HepG2 (cell line): ENCODE measurements at regions of chr14 and their contacts with region 1.

Region 1: GRCh38 chr14:77053046-77053841 is 24.7 kb upstream of the IRF2BPL start:
- DNase-seq: peak; percentile 70
- ATAC-seq: peak; percentile 95
- H3K4me3 ChIP-seq: no peak overlapping the region
- H3K27ac ChIP-seq: no peak overlapping the region
- H3K4me1 ChIP-seq: peaks cover 25% of the 10 kb centered on the region
- H3K27me3 ChIP-seq: peaks cover 0 to 8% of the 10 kb centered on the region in 2 experiments; a peak in 1 of 5 replicates
- CTCF ChIP-seq: peak; percentile 95
- EP300 ChIP-seq: no peak
- POLR2A ChIP-seq: no peak
- RAD21 ChIP-seq: peak; percentile 99

Region 2: GRCh38 chr14:76720382-76720813 is 332.8 kb before region 1 on chr14:
- CTCF ChIA-PET with region 1: no interaction called
- POLR2A ChIA-PET with region 1: no interaction called
- in situ Hi-C with region 1: no loop called
- intact Hi-C with region 1: no loop called
- DNase-seq: peak; percentile 36
- ATAC-seq: peak; percentile 80
- H3K4me3 ChIP-seq: no peak overlapping the region
- H3K27ac ChIP-seq: no peak overlapping the region
- H3K4me1 ChIP-seq: peaks cover 14% of the 10 kb centered on the region
- H3K27me3 ChIP-seq: peaks cover 2 to 4% of the 10 kb centered on the region in 2 experiments; a peak in 2 of 5 replicates
- CTCF ChIP-seq: no peak
- EP300 ChIP-seq: no peak; a peak in 1 of 4 replicates
- POLR2A ChIP-seq: no peak
- RAD21 ChIP-seq: no peak

Region 3: GRCh38 chr14:76876076-76876475 is 177.2 kb before region 1 on chr14:
- CTCF ChIA-PET with region 1: interaction called, 13 read pairs
- POLR2A ChIA-PET with region 1: no interaction called
- in situ Hi-C with region 1: no loop called
- intact Hi-C with region 1: no loop called
- DNase-seq: peak; percentile 43
- ATAC-seq: peak; percentile 93
- H3K4me3 ChIP-seq: no peak overlapping the region
- H3K27ac ChIP-seq: no peak overlapping the region
- H3K4me1 ChIP-seq: no peaks in the 10 kb centered on the region
- H3K27me3 ChIP-seq: peaks cover 4 to 10% of the 10 kb centered on the region in 2 experiments; a peak in 3 of 5 replicates
- CTCF ChIP-seq: peak; percentile 92
- EP300 ChIP-seq: no peak
- POLR2A ChIP-seq: no peak
- RAD21 ChIP-seq: peak; percentile 90

Region 4: GRCh38 chr14:76918751-76919543 is 134.3 kb before region 1 on chr14:
- CTCF ChIA-PET with region 1: interaction called, 38 read pairs
- POLR2A ChIA-PET with region 1: no interaction called
- in situ Hi-C with region 1: no loop called
- intact Hi-C with region 1: no loop called
- DNase-seq: peak; percentile 24
- ATAC-seq: peak; percentile 77
- H3K4me3 ChIP-seq: peak overlapping the region; percentile 9 to 61 (median 39); a peak in 3 of 6 replicates
- H3K27ac ChIP-seq: no peak overlapping the region
- H3K4me1 ChIP-seq: peaks cover 53% of the 10 kb centered on the region
- H3K27me3 ChIP-seq: peaks cover 3 to 18% of the 10 kb centered on the region in 2 experiments; a peak in 3 of 5 replicates
- CTCF ChIP-seq: no peak
- EP300 ChIP-seq: no peak
- POLR2A ChIP-seq: no peak
- RAD21 ChIP-seq: no peak

Region 5: DNA sequence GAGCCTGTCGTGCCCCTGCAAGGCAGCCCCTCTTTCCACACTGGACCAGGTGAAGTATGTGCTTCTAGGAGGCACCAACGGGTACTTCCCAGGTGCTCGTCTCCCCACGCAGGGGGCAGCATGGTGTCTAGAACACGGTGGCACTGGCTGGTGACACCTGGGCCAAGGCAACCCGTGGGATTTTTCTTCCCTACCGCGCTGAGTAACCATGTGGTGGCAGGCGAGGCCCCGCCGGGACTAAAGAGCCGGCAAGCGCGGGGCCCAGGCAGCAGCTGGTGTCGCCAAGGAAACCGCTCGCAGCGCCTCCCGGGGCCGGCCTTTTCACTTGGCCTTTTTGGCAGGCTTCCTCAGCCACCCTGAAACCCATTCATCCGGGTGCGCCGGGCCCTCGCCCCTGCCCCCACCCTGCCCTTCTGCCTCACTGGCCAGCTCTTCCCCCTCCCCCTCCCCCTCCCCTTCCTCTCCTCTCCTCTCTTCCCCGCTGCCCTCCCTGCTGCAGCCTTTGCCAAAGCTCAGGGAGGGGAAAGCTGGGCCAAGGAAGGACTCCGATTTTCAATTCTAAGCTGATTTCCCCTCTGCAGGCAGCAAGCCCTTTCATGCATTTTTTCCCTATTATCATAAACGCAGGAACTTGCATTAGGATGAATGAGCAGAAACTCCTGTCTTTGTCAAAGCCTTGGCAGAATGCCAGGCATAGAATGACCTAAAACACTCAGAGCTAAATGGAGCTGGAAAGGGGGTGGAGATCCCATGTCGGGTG is 106.0 kb before region 1 on chr14:
- CTCF ChIA-PET with region 1: interaction called, 24 read pairs
- POLR2A ChIA-PET with region 1: no interaction called
- in situ Hi-C with region 1: no loop called
- intact Hi-C with region 1: loop called (anchors 1 kb)
- DNase-seq: peak; percentile 74
- ATAC-seq: peak; percentile 92
- H3K4me3 ChIP-seq: peak overlapping the region; percentile 12 to 68 (median 27); a peak in 4 of 6 replicates
- H3K27ac ChIP-seq: no peak overlapping the region
- H3K4me1 ChIP-seq: peaks cover 79% of the 10 kb centered on the region
- H3K27me3 ChIP-seq: no peaks in the 10 kb centered on the region
- CTCF ChIP-seq: peak; percentile 82
- EP300 ChIP-seq: no peak
- POLR2A ChIP-seq: no peak
- RAD21 ChIP-seq: peak; percentile 90

Region 6: GRCh38 chr14:76968621-76969063 is 84.6 kb before region 1 on chr14:
- CTCF ChIA-PET with region 1: interaction called, 5 read pairs
- POLR2A ChIA-PET with region 1: no interaction called
- in situ Hi-C with region 1: no loop called
- intact Hi-C with region 1: loop called (anchors 2 kb)
- DNase-seq: peak; percentile 92
- ATAC-seq: peak; percentile 94
- H3K4me3 ChIP-seq: peak overlapping the region in 1 of 3 experiments; percentile 50; a peak in 4 of 6 replicates
- H3K27ac ChIP-seq: peak overlapping the region; percentile 61
- H3K4me1 ChIP-seq: peaks cover 76% of the 10 kb centered on the region
- H3K27me3 ChIP-seq: no peaks in the 10 kb centered on the region
- CTCF ChIP-seq: peak; percentile 85
- EP300 ChIP-seq: peak in 1 of 2 experiments; percentile 68; a peak in 1 of 4 replicates
- POLR2A ChIP-seq: no peak
- RAD21 ChIP-seq: peak; percentile 86

Region 7: GRCh38 chr14:76985540-76986230 is 67.6 kb before region 1 on chr14:
- CTCF ChIA-PET with region 1: no interaction called
- POLR2A ChIA-PET with region 1: no interaction called
- in situ Hi-C with region 1: no loop called
- intact Hi-C with region 1: no loop called
- DNase-seq: no peak
- ATAC-seq: peak; percentile 39
- H3K4me3 ChIP-seq: no peak overlapping the region
- H3K27ac ChIP-seq: no peak overlapping the region
- H3K4me1 ChIP-seq: peaks cover 29% of the 10 kb centered on the region
- H3K27me3 ChIP-seq: peaks cover 0 to 1% of the 10 kb centered on the region in 2 experiments; a peak in 1 of 5 replicates
- CTCF ChIP-seq: no peak
- EP300 ChIP-seq: no peak
- POLR2A ChIP-seq: no peak
- RAD21 ChIP-seq: no peak

Region 8: GRCh38 chr14:77076113-77076631 is 22.9 kb after region 1 on chr14:
- CTCF ChIA-PET with region 1: no interaction called
- POLR2A ChIA-PET with region 1: no interaction called
- in situ Hi-C with region 1: no loop called
- intact Hi-C with region 1: no loop called
- DNase-seq: peak; percentile 19
- ATAC-seq: no peak
- H3K4me3 ChIP-seq: no peak overlapping the region
- H3K27ac ChIP-seq: no peak overlapping the region
- H3K4me1 ChIP-seq: peaks cover 16% of the 10 kb centered on the region
- H3K27me3 ChIP-seq: no peaks in the 10 kb centered on the region; a peak in 2 of 5 replicates
- CTCF ChIP-seq: no peak
- EP300 ChIP-seq: no peak
- POLR2A ChIP-seq: no peak
- RAD21 ChIP-seq: no peak